ENCODE measurements at regions of chr2 and their contacts with region 1.

Region 1: GRCh38 chr2:144402251-144402650 is 117.7 kb downstream of the ZEB2 start:
- DNase-seq: peak in 1 of 2 donors; percentile 33
- ATAC-seq: peak in 7 of 8 donors; percentile 11 to 64 (median 38)
- H3K4me3 ChIP-seq: no peak overlapping the region
- H3K27ac ChIP-seq: peak overlapping the region in 6 of 10 donors; percentile 7 to 61 (median 16)
- H3K4me1 ChIP-seq: peaks cover 0 to 43% (median 32%) of the 10 kb centered on the region in 9 donors
- H3K27me3 ChIP-seq: no peaks in the 10 kb centered on the region
- CTCF ChIP-seq: no peak

Region 2: GRCh38 chr2:143968360-143968759 is 433.9 kb before region 1 on chr2:
- intact Hi-C with region 1: no loop called
- DNase-seq: no peak
- ATAC-seq: no peak
- H3K4me3 ChIP-seq: no peak overlapping the region
- H3K27ac ChIP-seq: no peak overlapping the region
- H3K4me1 ChIP-seq: no peaks in the 10 kb centered on the region
- H3K27me3 ChIP-seq: no peaks in the 10 kb centered on the region
- CTCF ChIP-seq: no peak

Region 3: DNA sequence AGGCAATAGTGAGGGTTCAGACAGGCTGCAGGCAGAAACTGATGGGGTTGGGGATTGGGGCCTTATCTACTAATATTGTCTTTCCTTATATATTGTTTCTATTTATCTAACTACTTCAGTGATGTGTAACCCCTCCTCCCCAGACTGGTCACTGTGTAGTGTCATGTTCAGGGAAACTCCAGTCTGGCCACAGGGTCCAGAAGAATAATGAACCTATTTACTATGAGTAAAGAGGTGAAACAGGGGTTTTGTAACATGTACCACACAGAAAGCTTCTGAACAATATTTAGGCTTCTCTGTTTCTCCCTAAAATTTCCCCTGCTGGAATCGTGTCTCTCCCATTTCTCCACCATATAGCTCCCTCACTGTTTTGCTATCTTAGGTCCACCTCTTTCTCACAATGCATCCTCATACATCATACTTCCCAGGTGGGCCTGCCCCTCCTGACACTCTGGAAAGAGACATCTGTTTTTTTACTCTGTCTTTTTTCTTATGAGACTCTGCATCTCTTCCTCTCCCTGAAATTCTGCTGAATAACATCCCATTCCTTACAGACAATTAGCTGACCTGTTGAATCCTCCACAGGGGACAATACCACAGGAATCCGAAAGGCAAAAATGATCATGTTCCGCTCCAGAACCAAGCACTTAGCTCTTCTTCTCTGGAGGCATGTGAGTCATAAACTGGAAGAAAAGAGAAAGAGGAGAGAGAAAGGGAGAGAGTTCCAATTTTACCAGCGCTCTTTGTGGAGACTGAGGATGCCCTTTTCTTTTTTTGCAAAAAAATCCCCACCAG is 37.1 kb before region 1 on chr2:
- intact Hi-C with region 1: no loop called
- DNase-seq: no peak
- ATAC-seq: no peak
- H3K4me3 ChIP-seq: no peak overlapping the region
- H3K27ac ChIP-seq: no peak overlapping the region
- H3K4me1 ChIP-seq: peaks cover 0 to 2% (median 0%) of the 10 kb centered on the region in 9 donors
- H3K27me3 ChIP-seq: no peaks in the 10 kb centered on the region
- CTCF ChIP-seq: no peak

Region 4: DNA sequence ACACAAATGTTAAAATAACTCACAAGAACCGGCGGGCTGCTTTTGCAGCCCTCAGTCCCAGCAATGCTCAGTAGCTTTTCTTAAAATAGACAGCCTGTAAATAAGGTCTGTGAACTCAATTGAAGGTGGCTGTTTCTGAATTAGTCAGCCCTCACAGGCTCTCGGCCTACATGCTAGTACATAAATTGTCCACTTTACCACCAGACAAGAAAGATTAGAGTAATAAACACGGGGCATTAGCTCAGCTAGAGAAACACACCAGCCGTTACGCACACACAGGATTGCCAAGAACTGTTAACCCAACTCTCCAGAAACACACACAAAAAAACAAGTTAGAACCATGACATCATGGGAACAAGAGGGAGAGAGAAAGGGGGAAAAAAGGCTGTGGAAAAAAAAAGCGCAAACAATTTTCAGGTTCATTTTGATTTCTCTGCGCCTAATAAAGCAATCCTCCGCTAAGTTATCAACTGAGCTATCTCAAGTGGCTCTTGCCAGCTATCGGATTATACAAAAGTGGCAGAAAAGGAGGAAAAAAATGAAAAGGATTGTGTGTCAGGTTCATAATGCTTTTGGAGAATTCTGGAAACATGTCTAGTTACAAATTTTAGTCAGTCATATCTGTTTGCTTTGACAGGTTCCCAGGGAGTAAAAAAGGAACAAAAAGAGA is 28.6 kb after region 1 on chr2:
- intact Hi-C with region 1: loop called in 1 of 10 experiments (anchors 1 kb)
- DNase-seq: peak in 1 of 2 donors; percentile 35
- ATAC-seq: peak; percentile 66 to 88 (median 84)
- H3K4me3 ChIP-seq: peak overlapping the region in 9 of 10 donors; percentile 5 to 44 (median 32)
- H3K27ac ChIP-seq: peak overlapping the region; percentile 57 to 86 (median 78)
- H3K4me1 ChIP-seq: peaks cover 0 to 94% (median 65%) of the 10 kb centered on the region in 9 donors
- H3K27me3 ChIP-seq: no peaks in the 10 kb centered on the region
- CTCF ChIP-seq: no peak

Measured in heart right ventricle (tissue), 16 donors.